Transverse colon (tissue), 4 donors: ENCODE measurements at regions of chr6 and their contacts with region 1.

Region 1: DNA sequence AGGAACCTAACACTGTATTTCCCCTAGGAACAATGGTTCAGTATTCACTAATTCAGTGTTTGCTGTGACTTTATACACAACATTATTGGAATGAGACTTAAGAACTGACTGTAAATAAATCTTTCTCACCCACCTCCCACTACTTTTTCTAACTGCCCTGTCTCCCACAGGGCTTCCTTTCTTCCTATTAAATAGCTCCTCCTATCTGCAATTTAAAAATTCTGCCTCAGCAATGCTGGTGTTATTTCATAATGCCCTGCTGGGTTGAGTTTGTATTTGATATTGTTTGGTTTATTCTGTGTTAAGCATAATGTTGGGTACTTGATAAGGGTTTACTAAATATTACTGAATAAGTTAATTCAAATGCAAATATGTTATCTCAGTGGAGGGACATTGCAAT is 573.1 kb upstream of the RNF217 start:
- DNase-seq: no peak
- H3K4me3 ChIP-seq: no peak overlapping the region
- H3K27ac ChIP-seq: no peak overlapping the region
- H3K4me1 ChIP-seq: no peaks in the 10 kb centered on the region
- H3K27me3 ChIP-seq: no peaks in the 10 kb centered on the region
- CTCF ChIP-seq: no peak
- EP300 ChIP-seq: no peak
- POLR2A ChIP-seq: no peak

Region 2: GRCh38 chr6:124441450-124441849 is 52.3 kb after region 1 on chr6:
- in situ Hi-C with region 1: no loop called
- intact Hi-C with region 1: no loop called
- DNase-seq: no peak
- H3K4me3 ChIP-seq: no peak overlapping the region
- H3K27ac ChIP-seq: no peak overlapping the region
- H3K4me1 ChIP-seq: no peaks in the 10 kb centered on the region
- H3K27me3 ChIP-seq: no peaks in the 10 kb centered on the region
- CTCF ChIP-seq: no peak
- EP300 ChIP-seq: no peak
- POLR2A ChIP-seq: no peak

Region 3: GRCh38 chr6:126217497-126217896 is 1828.4 kb after region 1 on chr6:
- in situ Hi-C with region 1: no loop called
- intact Hi-C with region 1: loop called (anchors 5 kb)
- DNase-seq: no peak
- H3K4me3 ChIP-seq: no peak overlapping the region
- H3K27ac ChIP-seq: no peak overlapping the region
- H3K4me1 ChIP-seq: no peaks in the 10 kb centered on the region
- H3K27me3 ChIP-seq: no peaks in the 10 kb centered on the region
- CTCF ChIP-seq: no peak
- EP300 ChIP-seq: no peak
- POLR2A ChIP-seq: no peak